ENCODE measurements at regions of chr11 and their contacts with region 1.

Region 1: DNA sequence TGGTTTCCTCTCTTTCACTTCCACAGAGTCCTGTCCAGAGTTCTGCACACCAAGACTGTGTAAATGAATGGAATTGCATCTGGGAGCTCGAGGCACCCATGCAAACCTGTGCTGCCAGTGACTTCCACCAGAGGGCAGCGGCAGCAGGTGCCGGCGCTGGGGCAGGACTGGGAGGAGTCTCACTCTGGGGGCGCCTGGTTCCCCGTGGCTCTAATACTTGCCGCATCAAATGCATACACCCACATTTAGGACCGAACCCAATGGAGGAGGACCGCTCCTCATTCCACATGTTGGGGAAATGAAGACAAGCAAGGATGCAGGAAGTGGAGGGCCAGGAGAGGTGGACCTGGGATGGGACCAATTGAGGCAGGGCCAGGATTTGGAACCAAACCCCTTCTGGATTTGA is 1.1 kb upstream of the CD6 start:
- DNase-seq: peak; percentile 75
- ATAC-seq: peak; percentile 89
- H3K4me3 ChIP-seq: no peak overlapping the region
- H3K27ac ChIP-seq: no peak overlapping the region
- H3K4me1 ChIP-seq: no peaks in the 10 kb centered on the region
- H3K27me3 ChIP-seq: peaks cover 38% of the 10 kb centered on the region
- CTCF ChIP-seq: peak; percentile 96

Region 2: GRCh38 chr11:60821827-60822599 is 148.4 kb before region 1 on chr11:
- CTCF ChIA-PET with region 1: no interaction called
- POLR2A ChIA-PET with region 1: no interaction called
- intact Hi-C with region 1: no loop called
- DNase-seq: no peak
- ATAC-seq: no peak
- H3K4me3 ChIP-seq: no peak overlapping the region
- H3K27ac ChIP-seq: no peak overlapping the region
- H3K4me1 ChIP-seq: no peaks in the 10 kb centered on the region
- H3K27me3 ChIP-seq: no peaks in the 10 kb centered on the region
- CTCF ChIP-seq: no peak

Region 3: GRCh38 chr11:60925868-60926267 is 44.5 kb before region 1 on chr11:
- CTCF ChIA-PET with region 1: no interaction called
- POLR2A ChIA-PET with region 1: no interaction called
- intact Hi-C with region 1: no loop called
- DNase-seq: peak; percentile 91
- ATAC-seq: peak; percentile 48
- H3K4me3 ChIP-seq: peak overlapping the region; percentile 85
- H3K27ac ChIP-seq: peak overlapping the region; percentile 56
- H3K4me1 ChIP-seq: peaks cover 26% of the 10 kb centered on the region
- H3K27me3 ChIP-seq: no peaks in the 10 kb centered on the region
- CTCF ChIP-seq: peak; percentile 45; the same call in 1 of the 2 replicates

Region 4: GRCh38 chr11:61173456-61173855 is 203.1 kb after region 1 on chr11:
- CTCF ChIA-PET with region 1: no interaction called
- POLR2A ChIA-PET with region 1: interaction called, 5 read pairs
- intact Hi-C with region 1: loop called (anchors 1 kb)
- DNase-seq: peak; percentile 84
- ATAC-seq: peak; percentile 93
- H3K4me3 ChIP-seq: no peak overlapping the region
- H3K27ac ChIP-seq: no peak overlapping the region
- H3K4me1 ChIP-seq: peaks cover 6% of the 10 kb centered on the region; the same call in 1 of the 2 replicates
- H3K27me3 ChIP-seq: peaks cover 30% of the 10 kb centered on the region
- CTCF ChIP-seq: peak; percentile 72

Region 5: DNA sequence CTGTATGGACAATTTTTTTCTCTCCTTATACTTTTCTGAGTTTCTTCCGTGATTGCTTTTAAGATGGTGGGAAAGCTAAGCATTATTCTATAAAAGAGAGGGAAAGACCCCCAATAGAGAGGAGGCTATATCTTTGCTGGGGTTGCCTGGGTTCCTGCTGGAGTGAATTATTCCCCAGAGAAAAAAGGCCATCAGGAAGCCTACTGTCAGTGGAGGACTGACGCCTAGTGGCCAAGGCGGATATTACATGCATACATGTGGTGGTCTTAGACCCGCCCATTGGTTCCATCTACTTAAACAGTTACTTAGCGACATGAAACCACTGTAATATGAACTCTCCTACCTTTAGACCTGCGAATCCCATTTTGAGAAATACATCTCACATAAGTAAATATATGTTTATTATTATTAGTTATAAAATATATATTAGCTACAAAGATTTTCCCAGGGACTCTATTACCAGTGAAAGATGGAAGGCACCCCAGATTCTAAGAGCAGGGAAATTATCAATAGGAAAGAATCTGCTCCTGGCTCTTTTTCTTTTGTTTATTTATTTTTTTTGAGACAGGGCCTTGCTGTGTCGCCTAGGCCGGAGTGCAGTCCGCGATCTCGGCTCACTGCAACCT is 217.2 kb after region 1 on chr11:
- CTCF ChIA-PET with region 1: no interaction called
- POLR2A ChIA-PET with region 1: no interaction called
- intact Hi-C with region 1: loop called (anchors 1 kb)
- DNase-seq: peak; percentile 91
- ATAC-seq: peak; percentile 87
- H3K4me3 ChIP-seq: no peak overlapping the region
- H3K27ac ChIP-seq: no peak overlapping the region
- H3K4me1 ChIP-seq: no peaks in the 10 kb centered on the region
- H3K27me3 ChIP-seq: no peaks in the 10 kb centered on the region
- CTCF ChIP-seq: peak; percentile 94

Measured in PC-3 (cell line).